ENCODE measurements at regions of chr3 and their contacts with region 1.

Region 1: DNA sequence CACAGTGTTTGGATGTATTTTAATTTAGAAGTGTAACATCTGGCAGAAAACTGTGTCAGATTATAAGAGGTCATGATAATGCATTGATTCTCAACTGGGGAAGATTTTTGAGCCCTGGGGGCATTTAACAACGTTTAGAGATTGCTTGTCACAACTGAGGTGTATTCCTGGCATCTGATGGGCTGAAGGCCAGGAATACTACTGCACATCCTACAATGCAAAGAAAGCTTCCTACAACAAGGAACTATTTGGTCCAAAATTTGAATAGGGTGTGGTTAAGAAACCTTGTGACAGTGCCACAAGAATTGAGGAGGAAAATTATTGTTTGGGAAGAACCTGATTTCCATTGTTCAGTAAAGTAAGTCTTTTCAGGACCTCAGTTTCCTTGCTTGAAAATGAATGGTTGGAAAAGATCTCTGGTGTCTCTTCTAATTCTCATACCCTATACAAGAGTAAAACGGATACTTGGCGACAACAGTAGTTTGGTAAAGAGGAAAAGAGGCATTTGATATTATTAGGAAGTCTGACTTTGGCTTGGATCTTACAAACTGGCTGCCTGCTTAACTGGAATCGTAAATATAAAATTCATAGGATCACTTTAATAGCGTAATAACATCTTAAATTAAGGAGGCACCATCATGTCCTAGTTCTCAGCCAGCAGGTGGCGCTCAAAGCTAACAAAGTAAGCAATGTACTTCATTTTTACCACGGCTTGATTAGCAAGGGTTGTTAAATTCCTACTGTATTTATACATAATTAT is 4.3 kb downstream of the DAZL start:
- DNase-seq: peak; percentile 54
- ATAC-seq: peak; percentile 61
- H3K4me3 Mint-ChIP-seq: no peak overlapping the region
- H3K27ac Mint-ChIP-seq: no peak overlapping the region
- H3K4me1 Mint-ChIP-seq: peaks cover 2% of the 10 kb centered on the region
- H3K27me3 Mint-ChIP-seq: peaks cover 5% of the 10 kb centered on the region
- CTCF ChIP-seq: no peak

Region 2: GRCh38 chr3:14791343-14791945 is 1809.5 kb before region 1 on chr3:
- CTCF ChIA-PET with region 1: no interaction called
- POLR2A ChIA-PET with region 1: no interaction called
- intact Hi-C with region 1: no loop called
- DNase-seq: no peak
- ATAC-seq: no peak
- H3K4me3 Mint-ChIP-seq: no peak overlapping the region
- H3K27ac Mint-ChIP-seq: no peak overlapping the region
- H3K4me1 Mint-ChIP-seq: no peaks in the 10 kb centered on the region
- H3K27me3 Mint-ChIP-seq: peaks cover 30% of the 10 kb centered on the region
- CTCF ChIP-seq: no peak

Region 3: DNA sequence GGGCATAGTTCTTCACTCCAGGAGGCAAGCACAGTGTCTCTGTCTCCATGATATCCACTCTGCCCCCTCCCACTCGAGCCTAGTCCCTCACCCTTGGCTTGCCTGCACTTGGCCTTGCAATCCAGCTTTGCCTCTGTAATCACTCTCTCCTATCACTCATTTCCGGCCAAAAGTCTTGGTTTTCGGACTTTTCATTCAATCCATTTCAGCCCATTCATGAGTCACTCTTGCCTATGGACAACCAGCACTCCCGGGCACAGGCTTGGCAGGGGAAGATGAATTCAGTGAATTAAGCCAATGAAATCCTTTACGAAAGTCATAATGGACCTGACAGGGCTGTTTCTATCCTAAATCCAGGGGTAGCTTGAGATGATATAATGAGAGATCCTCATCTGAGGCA is 17.4 kb before region 1 on chr3:
- CTCF ChIA-PET with region 1: no interaction called
- POLR2A ChIA-PET with region 1: no interaction called
- intact Hi-C with region 1: no loop called
- DNase-seq: no peak
- ATAC-seq: no peak
- H3K4me3 Mint-ChIP-seq: no peak overlapping the region
- H3K27ac Mint-ChIP-seq: no peak overlapping the region
- H3K4me1 Mint-ChIP-seq: no peaks in the 10 kb centered on the region
- H3K27me3 Mint-ChIP-seq: no peaks in the 10 kb centered on the region
- CTCF ChIP-seq: no peak

Region 4: DNA sequence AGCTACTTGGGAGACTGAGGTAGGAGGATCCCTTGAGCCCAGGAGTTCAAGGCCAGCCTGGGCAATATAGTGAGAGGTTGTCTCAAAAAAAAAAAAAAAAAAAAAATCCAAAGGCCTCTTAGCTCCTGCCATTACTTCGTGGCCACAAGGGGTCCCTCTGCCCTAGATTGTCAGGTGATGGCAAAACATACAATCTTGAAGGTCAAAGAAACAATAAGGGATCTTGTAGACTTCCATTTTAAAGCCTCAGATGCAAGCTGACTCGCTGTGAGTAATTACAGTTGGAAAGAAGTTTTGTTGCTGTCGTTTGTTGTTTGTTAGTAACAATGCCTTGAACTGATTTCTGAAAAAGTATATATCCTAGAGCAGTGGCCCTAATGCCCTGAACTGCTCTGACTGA is 227.9 kb after region 1 on chr3:
- CTCF ChIA-PET with region 1: interaction called, 13 read pairs
- POLR2A ChIA-PET with region 1: no interaction called
- intact Hi-C with region 1: loop called (anchors 1 kb)
- DNase-seq: no peak
- ATAC-seq: peak; percentile 60
- H3K4me3 Mint-ChIP-seq: no peak overlapping the region
- H3K27ac Mint-ChIP-seq: no peak overlapping the region
- H3K4me1 Mint-ChIP-seq: peaks cover 11% of the 10 kb centered on the region
- H3K27me3 Mint-ChIP-seq: no peaks in the 10 kb centered on the region
- CTCF ChIP-seq: no peak

Region 5: GRCh38 chr3:17140670-17141505 is 539.9 kb after region 1 on chr3:
- CTCF ChIA-PET with region 1: no interaction called
- POLR2A ChIA-PET with region 1: no interaction called
- intact Hi-C with region 1: loop called (anchors 2 kb)
- DNase-seq: no peak
- ATAC-seq: no peak
- H3K4me3 Mint-ChIP-seq: no peak overlapping the region
- H3K27ac Mint-ChIP-seq: no peak overlapping the region
- H3K4me1 Mint-ChIP-seq: peaks cover 9% of the 10 kb centered on the region
- H3K27me3 Mint-ChIP-seq: peaks cover 5% of the 10 kb centered on the region
- CTCF ChIP-seq: no peak

Region 6: DNA sequence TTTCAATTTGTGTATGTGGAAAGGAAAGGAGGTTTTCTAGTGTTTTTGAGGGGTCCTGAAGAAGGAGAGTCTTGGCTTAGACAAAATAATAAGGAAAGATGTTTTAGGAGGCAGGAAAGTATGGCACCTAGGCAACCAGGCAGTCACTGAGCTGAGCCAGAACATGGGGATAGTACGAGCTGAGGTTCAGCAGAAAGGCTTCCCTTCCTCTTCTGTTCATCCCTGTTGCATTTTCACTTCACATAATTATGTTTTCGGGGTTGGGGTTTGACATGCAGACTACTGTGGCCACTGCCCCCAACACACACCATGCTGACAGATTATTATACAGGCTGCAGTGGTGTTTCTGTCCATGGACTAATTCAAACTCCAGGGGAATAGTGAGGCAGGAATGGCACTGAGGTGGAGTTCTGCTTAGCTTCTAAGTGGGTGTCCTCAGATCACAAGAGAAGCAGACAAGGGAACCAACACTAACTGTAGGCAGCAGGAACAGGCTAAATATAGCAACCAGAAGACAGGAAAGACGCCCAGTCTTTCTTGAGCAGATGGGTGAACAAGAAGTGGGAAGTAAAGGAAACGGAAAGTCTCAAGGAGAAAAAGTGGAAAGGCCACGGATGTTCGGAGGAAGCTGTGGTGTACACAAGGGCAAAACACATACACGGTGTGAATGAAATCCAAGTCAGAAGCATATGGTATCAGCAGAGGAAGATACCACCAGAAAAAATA is 589.6 kb after region 1 on chr3:
- CTCF ChIA-PET with region 1: no interaction called
- POLR2A ChIA-PET with region 1: no interaction called
- intact Hi-C with region 1: no loop called
- DNase-seq: no peak
- ATAC-seq: no peak
- H3K4me3 Mint-ChIP-seq: peak overlapping the region; percentile 15
- H3K27ac Mint-ChIP-seq: no peak overlapping the region
- H3K4me1 Mint-ChIP-seq: peaks cover 40% of the 10 kb centered on the region
- H3K27me3 Mint-ChIP-seq: no peaks in the 10 kb centered on the region
- CTCF ChIP-seq: no peak

Region 7: DNA sequence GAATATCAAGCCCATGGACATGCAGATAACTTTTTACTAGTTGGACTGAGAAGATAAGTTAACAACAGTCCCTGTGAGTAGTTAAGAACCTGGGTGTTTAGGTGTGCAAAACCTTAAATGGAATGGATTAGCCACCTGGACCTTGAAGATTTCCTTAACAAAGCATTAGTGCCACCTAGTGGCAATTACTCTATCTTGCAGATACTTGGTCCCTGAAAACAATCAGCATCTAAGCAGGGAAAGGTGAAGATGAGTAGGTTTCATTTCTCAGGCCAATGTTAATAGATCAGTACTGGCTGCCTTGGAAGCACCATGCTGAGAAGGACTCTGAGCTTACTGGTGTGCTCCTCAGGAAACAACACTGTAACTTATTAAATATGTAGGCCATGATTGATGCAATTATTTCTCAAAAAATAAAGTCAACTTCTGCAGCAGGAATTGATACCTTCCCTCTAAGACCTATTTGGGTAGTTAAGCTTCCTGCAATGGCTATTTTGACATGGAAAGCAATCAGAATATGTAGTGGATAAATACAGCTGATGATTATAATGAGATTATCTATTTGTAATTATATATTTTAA is 812.1 kb after region 1 on chr3:
- CTCF ChIA-PET with region 1: interaction called, 10 read pairs
- POLR2A ChIA-PET with region 1: no interaction called
- intact Hi-C with region 1: loop called (anchors 1 kb)
- DNase-seq: no peak
- ATAC-seq: peak; percentile 76
- H3K4me3 Mint-ChIP-seq: no peak overlapping the region
- H3K27ac Mint-ChIP-seq: no peak overlapping the region
- H3K4me1 Mint-ChIP-seq: no peaks in the 10 kb centered on the region
- H3K27me3 Mint-ChIP-seq: no peaks in the 10 kb centered on the region
- CTCF ChIP-seq: peak; percentile 69

Region 8: DNA sequence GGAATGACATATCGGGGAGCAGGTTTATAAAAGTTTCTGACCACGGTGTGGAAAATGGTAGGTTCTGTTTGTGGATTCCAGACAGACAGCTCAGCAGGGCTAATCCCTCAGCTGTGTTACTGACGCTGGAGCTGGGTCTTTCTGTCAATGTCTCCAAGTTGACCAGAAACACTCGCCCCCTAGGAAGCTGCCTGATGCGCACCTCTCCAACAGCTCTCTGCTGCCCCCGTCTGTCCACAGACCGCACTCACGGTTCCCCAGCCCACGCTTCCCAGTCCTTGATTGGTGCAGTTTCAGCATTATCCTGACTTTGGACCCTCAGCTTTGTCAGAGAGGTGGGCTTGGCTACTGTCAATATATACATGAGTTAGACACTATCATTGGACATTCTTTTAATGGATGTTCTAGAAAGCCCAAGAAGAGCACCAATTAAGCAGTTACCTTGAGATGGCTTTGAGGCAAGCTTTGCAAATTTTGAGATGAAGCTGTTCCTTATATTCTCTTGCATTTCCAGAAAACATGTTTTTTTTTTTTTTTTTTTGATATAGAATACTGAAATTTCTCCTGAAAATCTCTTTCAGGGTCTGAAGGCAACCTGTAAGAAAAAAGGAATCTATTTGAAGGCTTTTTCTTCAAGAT is 1240.3 kb after region 1 on chr3:
- CTCF ChIA-PET with region 1: interaction called, 15 read pairs
- POLR2A ChIA-PET with region 1: no interaction called
- intact Hi-C with region 1: loop called (anchors 1 kb)
- DNase-seq: peak; percentile 72
- ATAC-seq: peak; percentile 93
- H3K4me3 Mint-ChIP-seq: no peak overlapping the region
- H3K27ac Mint-ChIP-seq: no peak overlapping the region
- H3K4me1 Mint-ChIP-seq: no peaks in the 10 kb centered on the region
- H3K27me3 Mint-ChIP-seq: no peaks in the 10 kb centered on the region
- CTCF ChIP-seq: peak; percentile 86